HEK293T (cell line): ENCODE measurements at regions of chr12 and their contacts with region 1.

Region 1: DNA sequence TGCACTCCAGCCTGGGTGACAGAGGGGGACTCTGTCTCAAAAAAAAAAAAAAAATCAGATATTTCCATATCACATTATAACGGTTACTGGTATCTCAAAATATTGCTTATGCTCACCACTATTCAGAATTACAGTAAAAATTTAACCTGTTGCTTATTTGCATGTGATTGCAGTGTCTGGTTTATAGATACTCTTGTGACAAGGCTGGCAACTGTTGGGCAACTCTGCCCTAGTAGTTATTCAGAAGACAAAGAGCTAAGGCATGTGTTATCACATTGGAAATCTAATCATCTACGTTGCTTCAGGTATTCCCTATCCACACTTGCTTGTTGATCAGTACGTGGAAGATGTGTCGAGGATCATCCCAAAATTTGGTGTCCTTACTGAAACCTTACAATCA is 20.5 kb downstream of the RPAP3 start:
- DNase-seq: no peak

Region 2: GRCh38 chr12:47672068-47672467 is 13.3 kb before region 1 on chr12:
- CTCF ChIA-PET with region 1: interaction called, 12 read pairs
- POLR2A ChIA-PET with region 1: no interaction called
- DNase-seq: no peak

Region 3: GRCh38 chr12:47698055-47698454 is 12.7 kb after region 1 on chr12:
- CTCF ChIA-PET with region 1: no interaction called
- POLR2A ChIA-PET with region 1: no interaction called
- DNase-seq: no peak